ENCODE measurements at regions of chr2 and their contacts with region 1.

Region 1: DNA sequence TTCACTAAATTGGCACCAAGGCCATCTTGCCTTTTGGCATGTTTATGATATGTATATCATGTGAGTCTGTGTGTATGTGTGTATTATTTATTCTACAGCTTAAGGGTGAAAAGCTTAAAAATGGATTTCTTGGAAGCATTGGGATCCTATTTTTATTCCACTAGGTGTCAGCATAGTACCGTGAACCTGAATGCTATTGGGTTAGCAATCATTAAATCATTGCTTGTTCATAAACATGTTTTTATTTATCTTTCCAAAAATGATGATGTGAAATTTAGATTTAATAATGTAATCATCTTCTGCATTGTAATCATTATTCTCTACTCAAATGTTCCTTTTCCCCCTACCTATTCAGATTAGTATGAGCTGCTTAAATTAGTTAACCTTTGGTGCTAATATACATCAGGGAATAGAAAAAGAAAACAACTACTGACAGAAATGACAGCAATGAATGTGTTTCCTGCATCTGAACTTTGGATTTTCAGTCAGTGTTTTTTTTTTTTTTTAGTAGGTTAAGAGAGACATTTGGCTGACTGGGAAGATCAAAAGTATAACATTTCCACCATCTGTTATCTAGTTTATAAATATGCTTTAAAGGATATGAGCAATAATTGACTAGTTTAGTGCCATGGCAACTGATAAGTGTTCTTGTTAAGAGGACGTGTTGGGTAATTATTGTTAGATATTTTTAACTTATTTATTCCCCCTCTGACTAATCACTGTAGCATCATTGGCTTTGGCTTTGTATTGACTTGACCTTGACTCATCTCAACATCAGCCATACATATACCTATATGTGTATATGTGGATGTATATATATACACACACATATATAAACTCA is 14.1 kb upstream of the ZSWIM2 start:
- DNase-seq: peak; percentile 36
- H3K27ac ChIP-seq: no peak overlapping the region
- CTCF ChIP-seq: peak; percentile 80

Region 2: GRCh38 chr2:185955050-185955449 is 908.0 kb before region 1 on chr2:
- CTCF ChIA-PET with region 1: interaction called, 10 read pairs
- POLR2A ChIA-PET with region 1: no interaction called
- DNase-seq: no peak
- H3K27ac ChIP-seq: no peak overlapping the region
- CTCF ChIP-seq: no peak

Measured in RWPE1 (cell line).